ENCODE measurements at regions of chr11 and their contacts with region 1.

Region 1: GRCh38 chr11:7986768-7987559 is at the start of gene EIF3F:
- DNase-seq: peak; percentile 100
- ATAC-seq: peak; percentile 97
- H3K4me3 ChIP-seq: peak within 1 kb of the TSS; percentile 93
- H3K27ac ChIP-seq: peak within 1 kb of the TSS; percentile 13; the same call in 1 of the 2 replicates
- H3K4me1 ChIP-seq: peaks cover 10 to 21% of the 10 kb centered on the region in 2 experiments; a peak in 3 of 4 replicates
- H3K27me3 ChIP-seq: no peaks in the 10 kb centered on the region
- CTCF ChIP-seq: peak; percentile 77 to 90 (median 77)
- POLR2A ChIP-seq: no peak
- RAD21 ChIP-seq: peak; percentile 83
- total RNA-seq, gene EIF3F: 313 TPM

Region 2: DNA sequence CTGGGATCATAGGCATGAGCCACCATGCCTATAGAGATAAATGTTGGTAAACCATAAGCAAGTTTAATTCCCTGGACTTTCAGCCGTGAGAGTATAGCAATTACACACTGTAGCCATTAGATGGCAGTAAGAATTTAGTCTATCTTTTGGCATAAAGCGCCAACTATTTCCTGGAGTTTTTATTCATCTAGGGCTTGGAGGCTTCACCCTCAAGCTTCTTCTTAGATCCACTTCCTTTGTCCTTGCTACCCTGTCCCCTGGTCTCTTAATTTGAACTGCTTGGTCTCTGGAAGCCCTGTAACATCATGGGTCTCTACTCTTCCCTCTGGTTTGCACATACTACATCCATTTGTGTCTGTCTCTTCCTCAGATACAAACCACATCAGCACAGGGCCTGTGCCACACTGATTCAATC is 94.1 kb before region 1 on chr11:
- CTCF ChIA-PET with region 1: interaction called, 22 read pairs
- POLR2A ChIA-PET with region 1: no interaction called
- RAD21 ChIA-PET with region 1: interaction called in 1 of 2 experiments, 4 read pairs
- intact Hi-C with region 1: loop called (anchors 1 kb)
- DNase-seq: peak; percentile 22
- ATAC-seq: peak; percentile 90
- H3K4me3 ChIP-seq: no peak overlapping the region
- H3K27ac ChIP-seq: no peak overlapping the region
- H3K4me1 ChIP-seq: no peaks in the 10 kb centered on the region
- H3K27me3 ChIP-seq: peaks cover 30% of the 10 kb centered on the region
- CTCF ChIP-seq: peak; percentile 62 to 73 (median 70); a peak in 5 of 6 replicates
- POLR2A ChIP-seq: no peak
- RAD21 ChIP-seq: peak; percentile 73

Region 3: GRCh38 chr11:7904914-7905313 is 82.0 kb before region 1 on chr11:
- CTCF ChIA-PET with region 1: interaction called, 6 read pairs
- POLR2A ChIA-PET with region 1: no interaction called
- RAD21 ChIA-PET with region 1: interaction called in 1 of 2 experiments, 4 read pairs
- intact Hi-C with region 1: loop called (anchors 5 kb)
- DNase-seq: no peak
- ATAC-seq: no peak
- H3K4me3 ChIP-seq: no peak overlapping the region
- H3K27ac ChIP-seq: no peak overlapping the region
- H3K4me1 ChIP-seq: no peaks in the 10 kb centered on the region
- H3K27me3 ChIP-seq: peaks cover 41% of the 10 kb centered on the region
- CTCF ChIP-seq: no peak
- POLR2A ChIP-seq: no peak
- RAD21 ChIP-seq: peak; percentile 19; the same call in 1 of the 2 replicates

Region 4: DNA sequence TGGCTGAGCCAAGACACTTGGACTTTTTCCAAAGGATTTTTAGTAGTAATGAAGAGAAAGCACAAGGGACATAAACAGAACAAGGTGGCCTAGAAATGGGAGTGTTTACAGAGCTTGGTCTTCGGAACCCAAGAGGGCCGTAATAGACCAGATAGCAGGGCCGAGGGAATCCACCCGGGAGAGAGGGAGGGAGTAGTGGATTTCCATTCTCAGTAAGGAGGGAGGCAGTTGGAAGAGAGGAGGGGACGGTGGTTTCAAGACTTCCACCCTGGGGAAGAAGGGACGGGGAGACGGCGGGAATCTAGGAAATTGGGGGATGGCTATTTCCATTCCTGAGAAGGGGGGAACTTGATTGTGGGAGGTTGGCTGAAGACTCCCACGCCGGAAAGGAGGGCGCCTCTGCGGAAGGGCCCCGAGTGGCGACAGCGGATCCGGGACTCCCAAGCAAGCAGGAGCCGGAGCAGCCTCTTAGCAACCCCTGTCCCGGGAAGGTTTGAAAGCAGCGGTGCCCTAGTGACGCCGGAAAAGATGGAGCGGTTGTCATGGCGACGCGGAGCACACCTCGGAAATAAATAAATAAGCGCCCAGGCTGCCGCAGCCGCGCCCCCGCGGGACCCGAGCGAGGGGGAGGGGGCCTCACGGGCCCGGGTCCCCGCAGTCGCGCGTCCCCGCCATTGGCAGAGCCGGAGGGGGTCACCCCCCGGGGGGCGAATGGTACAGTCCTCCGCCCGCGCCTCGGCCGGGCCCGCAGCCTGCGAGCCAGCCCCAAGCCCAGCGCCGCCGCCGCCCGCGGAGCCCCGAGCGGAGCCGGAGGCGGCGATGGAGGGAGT is 31.7 kb after region 1 on chr11:
- CTCF ChIA-PET with region 1: no interaction called
- POLR2A ChIA-PET with region 1: no interaction called
- RAD21 ChIA-PET with region 1: no interaction called
- intact Hi-C with region 1: no loop called
- DNase-seq: no peak
- ATAC-seq: no peak
- H3K4me3 ChIP-seq: no peak overlapping the region
- H3K27ac ChIP-seq: no peak overlapping the region
- H3K4me1 ChIP-seq: no peaks in the 10 kb centered on the region
- H3K27me3 ChIP-seq: peaks cover 3% of the 10 kb centered on the region; the same call in 1 of the 2 replicates
- CTCF ChIP-seq: no peak
- POLR2A ChIP-seq: no peak
- RAD21 ChIP-seq: no peak

Measured in HCT116 (cell line).